Ovary (tissue), 10 donors: ENCODE measurements at regions of chr16 and their contacts with region 1.

Region 1: GRCh38 chr16:9578459-9578858 is 487.0 kb downstream of the HAPSTR1 start:
- DNase-seq: no peak
- H3K4me3 ChIP-seq: no peak overlapping the region
- H3K27ac ChIP-seq: no peak overlapping the region
- H3K4me1 ChIP-seq: no peaks in the 10 kb centered on the region
- H3K27me3 ChIP-seq: no peaks in the 10 kb centered on the region
- CTCF ChIP-seq: no peak
- EP300 ChIP-seq: no peak
- POLR2A ChIP-seq: no peak

Region 2: DNA sequence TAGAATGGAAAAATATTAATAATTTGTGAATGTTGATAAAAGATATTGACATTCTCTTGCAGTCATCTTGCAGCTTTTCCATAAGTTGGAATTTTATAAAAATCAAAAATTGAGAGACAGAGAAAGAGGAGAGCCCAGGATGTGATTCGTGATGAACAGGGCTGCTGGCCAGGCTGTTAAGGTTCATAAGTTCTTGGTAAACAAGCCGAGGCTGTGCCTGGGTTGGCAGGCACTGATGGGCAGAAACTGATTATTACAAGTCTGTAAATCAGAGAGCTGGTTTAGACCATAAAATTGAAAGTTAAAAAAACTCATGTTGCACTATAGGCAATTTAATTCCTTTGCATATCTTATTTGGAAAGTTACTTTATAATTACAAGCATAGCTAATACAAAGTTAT is 46.7 kb after region 1 on chr16:
- intact Hi-C with region 1: loop called in 1 of 4 experiments (anchors 10 kb)
- DNase-seq: no peak
- H3K4me3 ChIP-seq: no peak overlapping the region
- H3K27ac ChIP-seq: no peak overlapping the region
- H3K4me1 ChIP-seq: no peaks in the 10 kb centered on the region
- H3K27me3 ChIP-seq: no peaks in the 10 kb centered on the region
- CTCF ChIP-seq: no peak
- EP300 ChIP-seq: no peak
- POLR2A ChIP-seq: no peak